ENCODE measurements at regions of chr20 and their contacts with region 1.

Region 1: GRCh38 chr20:57364451-57364850 is 13.4 kb downstream of the RAE1 start:
- DNase-seq: no peak
- H3K4me3 ChIP-seq: no peak overlapping the region
- H3K27ac ChIP-seq: no peak overlapping the region
- H3K4me1 ChIP-seq: no peaks in the 10 kb centered on the region
- H3K27me3 ChIP-seq: no peaks in the 10 kb centered on the region
- CTCF ChIP-seq: no peak
- EP300 ChIP-seq: no peak
- POLR2A ChIP-seq: no peak
- RAD21 ChIP-seq: no peak

Region 2: GRCh38 chr20:57374931-57375651 is 10.6 kb after region 1 on chr20:
- CTCF ChIA-PET with region 1: interaction called, 7 read pairs
- POLR2A ChIA-PET with region 1: interaction called, 11 read pairs
- DNase-seq: no peak
- H3K4me3 ChIP-seq: no peak overlapping the region
- H3K27ac ChIP-seq: 0 out of 2 replicates have a peak overlapping the region, but pooled peaks have one; percentile 4
- H3K4me1 ChIP-seq: peaks cover 0 to 10% (median 3%) of the 10 kb centered on the region in 4 experiments; a peak in 3 of 7 replicates
- H3K27me3 ChIP-seq: no peaks in the 10 kb centered on the region; a peak in 1 of 7 replicates
- CTCF ChIP-seq: no peak
- EP300 ChIP-seq: no peak
- POLR2A ChIP-seq: no peak
- RAD21 ChIP-seq: no peak